ENCODE measurements at regions of chr7 and their contacts with region 1.

Region 1: DNA sequence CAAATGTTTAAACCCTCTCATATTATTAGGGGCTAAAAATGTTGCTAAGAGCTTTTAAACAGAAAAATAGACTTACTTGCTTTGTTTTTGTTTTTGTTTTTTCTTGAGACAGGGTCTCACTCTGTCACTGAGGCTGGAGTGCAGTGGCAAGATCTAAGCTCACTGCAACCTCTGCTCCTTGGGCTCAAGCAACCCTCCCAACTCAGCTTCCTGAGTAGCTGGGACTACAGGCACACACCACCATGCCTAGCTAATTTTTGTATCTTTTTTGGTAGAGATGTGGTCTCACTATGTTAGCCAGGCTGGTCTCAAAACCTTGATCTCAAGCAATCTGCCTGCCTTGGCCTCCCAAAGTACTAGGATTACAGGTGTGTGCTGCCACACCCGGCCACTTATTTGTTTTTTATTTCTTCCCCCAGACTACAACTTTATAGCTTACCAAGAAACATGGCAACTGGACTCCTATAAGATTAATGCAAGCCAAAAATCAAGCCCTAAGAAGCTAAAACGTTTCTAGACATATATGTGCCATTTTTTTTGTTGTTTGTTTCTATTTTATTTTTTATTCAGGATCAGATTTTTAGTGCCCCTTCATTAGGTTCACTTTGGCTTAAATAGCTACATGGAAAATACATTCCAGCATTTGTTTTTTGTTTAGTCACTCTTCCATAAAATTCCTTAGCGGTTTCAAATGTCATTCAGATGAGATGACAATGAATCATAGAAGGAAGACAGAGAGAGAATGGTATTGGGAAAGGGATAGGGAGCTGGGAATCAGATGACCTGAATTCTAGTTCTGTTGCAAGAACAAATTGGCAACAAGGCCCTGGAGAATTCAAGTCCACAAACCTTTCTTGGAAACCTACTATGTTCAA is 163.4 kb upstream of the MKLN1 start:
- DNase-seq: peak; percentile 91
- ATAC-seq: peak; percentile 91
- H3K4me3 ChIP-seq: peak overlapping the region; percentile 34; the same call in 1 of the 2 replicates
- H3K27ac ChIP-seq: peak overlapping the region; percentile 84
- H3K4me1 ChIP-seq: peaks cover 37% of the 10 kb centered on the region
- H3K27me3 ChIP-seq: no peaks in the 10 kb centered on the region
- CTCF ChIP-seq: no peak

Region 2: DNA sequence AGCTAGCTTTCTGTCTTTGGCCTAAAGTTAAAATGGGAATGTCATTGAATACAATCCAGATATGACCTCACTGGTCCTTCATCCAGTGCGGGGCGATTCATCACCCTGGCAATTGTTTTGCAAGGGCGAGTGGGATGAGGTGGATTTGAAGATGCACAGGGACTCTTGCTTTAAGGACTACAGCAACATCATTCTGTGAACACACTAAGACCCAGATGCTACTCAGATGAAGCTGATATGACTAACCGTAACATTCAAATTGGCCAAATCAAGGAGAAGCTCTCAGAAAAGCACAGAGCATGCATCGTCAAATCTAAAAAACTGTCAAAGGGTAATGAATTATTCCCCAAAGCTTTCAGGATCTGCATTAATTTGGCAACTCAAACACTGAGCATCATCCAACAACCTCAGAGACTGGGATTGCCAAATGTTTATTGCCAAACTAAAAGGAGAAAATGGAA is 771.1 kb before region 1 on chr7:
- CTCF ChIA-PET with region 1: no interaction called
- POLR2A ChIA-PET with region 1: no interaction called
- intact Hi-C with region 1: no loop called
- DNase-seq: no peak
- ATAC-seq: no peak
- H3K4me3 ChIP-seq: no peak overlapping the region
- H3K27ac ChIP-seq: no peak overlapping the region
- H3K4me1 ChIP-seq: no peaks in the 10 kb centered on the region
- H3K27me3 ChIP-seq: no peaks in the 10 kb centered on the region
- CTCF ChIP-seq: no peak

Region 3: DNA sequence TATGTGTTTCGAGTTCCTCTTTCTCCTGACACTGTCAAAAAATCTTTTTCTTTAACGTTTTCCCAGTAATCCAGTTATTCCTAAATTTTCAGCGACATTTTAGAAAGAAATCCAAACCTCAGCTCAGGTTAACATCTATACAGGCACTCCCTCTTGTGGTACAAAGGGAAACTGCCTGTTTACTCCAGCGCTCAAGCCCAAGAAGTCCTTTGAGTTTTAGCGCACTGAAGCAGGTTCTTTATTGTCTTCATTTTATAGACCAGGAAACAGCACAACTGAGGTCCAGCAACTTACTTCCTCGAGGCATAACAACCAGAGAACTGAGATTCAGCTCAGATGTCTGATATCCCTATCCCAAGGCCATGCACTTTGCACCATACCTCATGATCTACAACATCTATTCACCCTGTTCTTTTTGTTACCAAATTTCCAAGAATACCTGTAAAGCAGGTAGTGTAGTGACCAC is 123.8 kb before region 1 on chr7:
- CTCF ChIA-PET with region 1: no interaction called
- POLR2A ChIA-PET with region 1: no interaction called
- intact Hi-C with region 1: no loop called
- DNase-seq: peak; percentile 79
- ATAC-seq: peak; percentile 88
- H3K4me3 ChIP-seq: no peak overlapping the region
- H3K27ac ChIP-seq: no peak overlapping the region
- H3K4me1 ChIP-seq: peaks cover 15% of the 10 kb centered on the region
- H3K27me3 ChIP-seq: no peaks in the 10 kb centered on the region
- CTCF ChIP-seq: peak; percentile 94

Region 4: GRCh38 chr7:131090886-131091692 is 73.2 kb before region 1 on chr7:
- CTCF ChIA-PET with region 1: no interaction called
- POLR2A ChIA-PET with region 1: no interaction called
- intact Hi-C with region 1: no loop called
- DNase-seq: no peak
- ATAC-seq: no peak
- H3K4me3 ChIP-seq: no peak overlapping the region
- H3K27ac ChIP-seq: no peak overlapping the region
- H3K4me1 ChIP-seq: peaks cover 12% of the 10 kb centered on the region
- H3K27me3 ChIP-seq: no peaks in the 10 kb centered on the region
- CTCF ChIP-seq: no peak

Region 5: GRCh38 chr7:131145026-131145425 is 19.2 kb before region 1 on chr7:
- CTCF ChIA-PET with region 1: no interaction called
- POLR2A ChIA-PET with region 1: interaction called, 8 read pairs
- intact Hi-C with region 1: loop called (anchors 1 kb)
- DNase-seq: peak; percentile 87
- ATAC-seq: peak; percentile 93
- H3K4me3 ChIP-seq: peak overlapping the region; percentile 39; the same call in 1 of the 2 replicates
- H3K27ac ChIP-seq: peak overlapping the region; percentile 97
- H3K4me1 ChIP-seq: peaks cover 17% of the 10 kb centered on the region
- H3K27me3 ChIP-seq: no peaks in the 10 kb centered on the region
- CTCF ChIP-seq: no peak

Region 6: GRCh38 chr7:131327626-131328376 is 163.5 kb after region 1 on chr7 and contains the start of gene MKLN1:
- CTCF ChIA-PET with region 1: no interaction called
- POLR2A ChIA-PET with region 1: interaction called, 3 read pairs
- intact Hi-C with region 1: loop called (anchors 10 kb)
- DNase-seq: peak; percentile 85
- ATAC-seq: peak; percentile 88
- H3K4me3 ChIP-seq: peak within 1 kb of the TSS; percentile 88
- H3K27ac ChIP-seq: peak within 1 kb of the TSS; percentile 66
- H3K4me1 ChIP-seq: peaks cover 30% of the 10 kb centered on the region
- H3K27me3 ChIP-seq: no peaks in the 10 kb centered on the region
- CTCF ChIP-seq: no peak
- total RNA-seq, gene MKLN1: 15.3 and 16.3 TPM in 2 replicates

Measured in PC-3 (cell line).